ENCODE measurements at regions of chr10 and their contacts with region 1.

Region 1: DNA sequence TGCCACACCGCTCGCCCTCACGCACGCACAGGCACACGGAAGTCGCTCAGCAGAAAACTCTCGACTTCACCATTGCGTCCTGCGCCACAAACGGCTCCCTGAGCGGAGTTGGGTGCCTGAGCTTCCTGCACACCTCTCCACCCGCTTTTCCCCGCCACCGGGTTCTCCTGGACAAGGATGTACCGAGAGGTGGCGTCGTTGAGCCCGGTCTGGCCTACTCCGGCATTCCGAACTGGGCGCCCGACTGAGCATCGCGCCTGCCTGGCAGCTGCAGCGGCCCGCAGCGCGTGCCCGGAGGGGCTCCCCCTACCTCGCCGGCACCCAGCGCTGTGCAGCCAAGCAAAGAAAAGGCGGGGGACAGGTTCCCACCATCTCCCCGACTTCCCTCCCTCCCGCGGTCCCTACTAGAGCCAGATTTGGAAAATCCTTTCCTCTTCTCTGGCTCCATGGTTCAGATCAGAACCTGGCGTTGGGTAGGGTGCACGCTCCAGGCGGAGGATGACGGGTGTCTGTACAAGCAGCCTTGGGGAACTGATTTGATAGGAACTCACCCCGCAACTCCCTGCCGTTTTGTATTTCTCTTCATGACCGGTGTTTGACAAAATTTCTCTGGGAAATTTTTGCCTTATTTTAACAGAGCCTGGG is 1.7 kb downstream of the SORCS3 start:
- DNase-seq: peak; percentile 88
- H3K4me3 ChIP-seq: peak overlapping the region; percentile 28 to 39; a peak in 2 of 4 replicates
- H3K27ac ChIP-seq: no peak overlapping the region
- H3K4me1 ChIP-seq: peaks cover 0 to 18% of the 10 kb centered on the region in 2 experiments; a peak in 1 of 4 replicates
- H3K27me3 ChIP-seq: peaks cover 31% of the 10 kb centered on the region
- CTCF ChIP-seq: peak; percentile 55
- EP300 ChIP-seq: no peak
- RAD21 ChIP-seq: peak; percentile 63

Region 2: GRCh38 chr10:104580774-104581675 is 61.8 kb before region 1 on chr10:
- CTCF ChIA-PET with region 1: interaction called, 16 read pairs
- POLR2A ChIA-PET with region 1: no interaction called
- DNase-seq: peak; percentile 79
- H3K4me3 ChIP-seq: no peak overlapping the region
- H3K27ac ChIP-seq: peak overlapping the region in 1 of 2 experiments; percentile 63; a peak in 1 of 4 replicates
- H3K4me1 ChIP-seq: no peaks in the 10 kb centered on the region; a peak in 1 of 4 replicates
- H3K27me3 ChIP-seq: no peaks in the 10 kb centered on the region
- CTCF ChIP-seq: peak; percentile 89
- EP300 ChIP-seq: no peak
- RAD21 ChIP-seq: peak; percentile 83

Region 3: GRCh38 chr10:104614245-104614831 is 28.4 kb before region 1 on chr10:
- CTCF ChIA-PET with region 1: interaction called, 10 read pairs
- POLR2A ChIA-PET with region 1: no interaction called
- DNase-seq: peak; percentile 52
- H3K4me3 ChIP-seq: no peak overlapping the region
- H3K27ac ChIP-seq: no peak overlapping the region
- H3K4me1 ChIP-seq: no peaks in the 10 kb centered on the region; a peak in 1 of 4 replicates
- H3K27me3 ChIP-seq: no peaks in the 10 kb centered on the region; the same call in 1 of the 2 replicates
- CTCF ChIP-seq: peak; percentile 75
- EP300 ChIP-seq: no peak
- RAD21 ChIP-seq: peak; percentile 72

Region 4: GRCh38 chr10:104622598-104623209 is 20.1 kb before region 1 on chr10:
- CTCF ChIA-PET with region 1: interaction called, 20 read pairs
- POLR2A ChIA-PET with region 1: no interaction called
- DNase-seq: peak; percentile 62
- H3K4me3 ChIP-seq: no peak overlapping the region
- H3K27ac ChIP-seq: no peak overlapping the region
- H3K4me1 ChIP-seq: no peaks in the 10 kb centered on the region
- H3K27me3 ChIP-seq: no peaks in the 10 kb centered on the region; the same call in 1 of the 2 replicates
- CTCF ChIP-seq: peak; percentile 58
- EP300 ChIP-seq: no peak
- RAD21 ChIP-seq: peak; percentile 82

Region 5: DNA sequence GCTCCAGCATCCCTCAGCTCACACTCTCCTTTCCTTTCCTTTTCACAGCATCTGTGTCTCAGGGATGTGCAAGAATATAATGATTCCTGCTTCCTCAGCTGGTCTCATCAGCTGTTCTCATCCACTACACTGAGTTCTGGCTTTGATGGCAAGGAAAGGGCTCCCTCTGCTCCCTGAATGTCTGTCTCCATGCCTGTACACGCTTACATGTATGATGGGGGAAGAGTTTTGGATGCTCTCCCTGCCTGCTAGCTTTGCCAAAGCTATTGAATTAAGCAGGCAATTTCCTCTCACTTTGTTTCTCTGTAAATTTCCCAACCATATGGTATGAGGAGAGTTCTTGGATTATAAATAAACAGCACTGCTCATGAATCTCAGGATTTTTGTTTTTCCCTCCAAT is 252.8 kb after region 1 on chr10:
- CTCF ChIA-PET with region 1: interaction called, 13 read pairs
- POLR2A ChIA-PET with region 1: no interaction called
- DNase-seq: peak; percentile 24
- H3K4me3 ChIP-seq: no peak overlapping the region
- H3K27ac ChIP-seq: peak overlapping the region in 1 of 2 experiments; percentile 67; a peak in 2 of 4 replicates
- H3K4me1 ChIP-seq: peaks cover 0 to 18% of the 10 kb centered on the region in 2 experiments; a peak in 2 of 4 replicates
- H3K27me3 ChIP-seq: no peaks in the 10 kb centered on the region
- CTCF ChIP-seq: no peak
- EP300 ChIP-seq: no peak
- RAD21 ChIP-seq: no peak

Region 6: DNA sequence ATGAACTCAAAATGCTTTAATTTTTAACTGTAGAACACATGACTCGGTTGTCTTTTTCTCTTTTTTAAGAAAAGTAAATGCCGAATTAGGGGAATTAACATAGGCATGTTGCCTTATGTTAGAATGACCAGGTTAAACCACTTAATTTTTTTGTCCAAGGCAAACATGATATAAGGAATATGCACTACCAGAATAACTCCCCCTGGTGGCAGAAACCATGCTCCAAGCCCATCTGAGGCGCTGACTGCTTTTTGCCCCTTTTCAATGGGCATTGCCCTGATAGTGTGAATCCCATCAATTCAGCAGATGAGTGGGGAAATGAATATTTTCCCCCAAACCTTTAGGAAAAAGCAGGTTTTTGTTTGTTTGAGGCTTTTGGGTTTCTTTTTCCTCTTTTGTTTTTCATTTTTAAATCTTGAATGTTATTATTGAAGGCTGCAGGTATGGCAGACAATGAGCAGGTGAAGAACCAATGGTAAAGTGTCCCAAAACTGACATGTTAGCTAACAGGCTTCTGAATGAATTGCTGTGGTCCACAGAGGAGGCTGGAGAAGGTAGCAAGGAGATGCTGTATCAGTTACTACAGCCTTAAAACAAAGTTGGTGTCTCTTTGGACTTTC is 282.6 kb after region 1 on chr10:
- CTCF ChIA-PET with region 1: interaction called, 39 read pairs
- POLR2A ChIA-PET with region 1: no interaction called
- DNase-seq: peak; percentile 47
- H3K4me3 ChIP-seq: peak overlapping the region in 1 of 2 experiments; percentile 43; a peak in 1 of 4 replicates
- H3K27ac ChIP-seq: no peak overlapping the region
- H3K4me1 ChIP-seq: no peaks in the 10 kb centered on the region
- H3K27me3 ChIP-seq: no peaks in the 10 kb centered on the region
- CTCF ChIP-seq: peak; percentile 42
- EP300 ChIP-seq: no peak
- RAD21 ChIP-seq: peak; percentile 73

Region 7: GRCh38 chr10:104931612-104932134 is 288.9 kb after region 1 on chr10:
- CTCF ChIA-PET with region 1: interaction called, 13 read pairs
- POLR2A ChIA-PET with region 1: no interaction called
- DNase-seq: no peak
- H3K4me3 ChIP-seq: no peak overlapping the region
- H3K27ac ChIP-seq: no peak overlapping the region
- H3K4me1 ChIP-seq: no peaks in the 10 kb centered on the region
- H3K27me3 ChIP-seq: no peaks in the 10 kb centered on the region
- CTCF ChIP-seq: no peak
- EP300 ChIP-seq: no peak
- RAD21 ChIP-seq: no peak

Region 8: DNA sequence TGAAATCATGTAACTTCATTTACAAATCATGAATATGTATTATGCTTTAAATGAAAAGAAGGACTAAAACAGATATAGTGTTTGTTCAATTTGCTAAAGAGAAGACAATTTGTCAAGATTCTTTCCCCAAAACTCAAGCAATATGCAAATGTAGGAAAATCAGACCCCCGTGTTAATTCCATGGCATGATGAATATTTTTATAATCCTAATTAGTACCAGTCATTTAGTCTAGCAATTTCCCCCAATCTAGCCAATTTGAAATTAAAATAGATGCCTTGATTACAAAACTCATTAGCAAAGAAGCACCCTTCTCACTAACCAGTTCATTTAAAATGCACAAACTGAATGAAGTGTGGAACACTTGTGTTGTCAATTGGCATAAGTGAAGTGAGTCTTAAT is 345.9 kb after region 1 on chr10:
- CTCF ChIA-PET with region 1: no interaction called
- POLR2A ChIA-PET with region 1: no interaction called
- DNase-seq: no peak
- H3K4me3 ChIP-seq: no peak overlapping the region
- H3K27ac ChIP-seq: no peak overlapping the region
- H3K4me1 ChIP-seq: no peaks in the 10 kb centered on the region
- H3K27me3 ChIP-seq: no peaks in the 10 kb centered on the region
- CTCF ChIP-seq: no peak
- EP300 ChIP-seq: no peak
- RAD21 ChIP-seq: no peak

Measured in SK-N-SH (cell line).